ENCODE measurements at regions of chr2 and their contacts with region 1.

Region 1: DNA sequence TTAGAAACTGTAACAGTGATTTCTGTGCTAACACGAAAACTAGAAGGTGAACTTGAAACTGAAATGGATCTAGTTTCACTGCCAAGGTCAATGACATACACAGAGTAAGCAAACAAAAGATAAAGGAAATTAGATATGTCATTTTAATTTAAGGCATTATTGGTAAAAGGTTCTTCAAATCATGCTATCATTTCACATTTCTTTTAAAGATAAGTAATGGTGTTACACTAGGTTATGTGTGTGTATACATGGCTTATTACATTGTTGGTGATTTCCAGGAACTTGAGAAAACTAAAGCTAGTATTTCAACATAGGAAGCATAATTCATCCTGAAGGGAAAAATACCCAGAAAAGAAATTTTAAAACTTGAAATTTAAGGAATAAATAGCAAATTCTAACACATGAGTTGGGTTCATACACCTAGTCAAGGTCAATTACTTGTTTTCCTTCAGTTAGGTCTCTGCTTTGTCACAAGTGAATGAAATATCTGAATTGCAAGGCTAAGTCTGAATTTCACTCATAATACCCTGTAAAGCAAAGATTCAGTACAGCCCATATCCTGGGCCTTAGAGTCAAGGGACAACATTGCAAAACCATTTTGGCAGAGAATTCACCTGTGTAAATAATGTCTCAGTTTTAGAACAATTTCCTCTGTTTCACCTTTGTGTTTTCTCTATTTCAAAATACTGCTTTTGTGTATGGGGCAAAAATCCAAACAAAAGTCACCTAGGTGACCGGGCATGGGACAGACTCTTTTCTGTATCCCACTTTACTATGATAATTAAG is 141.6 kb downstream of the SRBD1 start:
- DNase-seq: no peak
- H3K4me3 ChIP-seq: no peak overlapping the region
- H3K27ac ChIP-seq: peak overlapping the region; percentile 72 to 77
- H3K4me1 ChIP-seq: peaks cover 0 to 17% of the 10 kb centered on the region in 2 donors
- H3K27me3 ChIP-seq: no peaks in the 10 kb centered on the region
- CTCF ChIP-seq: no peak

Region 2: DNA sequence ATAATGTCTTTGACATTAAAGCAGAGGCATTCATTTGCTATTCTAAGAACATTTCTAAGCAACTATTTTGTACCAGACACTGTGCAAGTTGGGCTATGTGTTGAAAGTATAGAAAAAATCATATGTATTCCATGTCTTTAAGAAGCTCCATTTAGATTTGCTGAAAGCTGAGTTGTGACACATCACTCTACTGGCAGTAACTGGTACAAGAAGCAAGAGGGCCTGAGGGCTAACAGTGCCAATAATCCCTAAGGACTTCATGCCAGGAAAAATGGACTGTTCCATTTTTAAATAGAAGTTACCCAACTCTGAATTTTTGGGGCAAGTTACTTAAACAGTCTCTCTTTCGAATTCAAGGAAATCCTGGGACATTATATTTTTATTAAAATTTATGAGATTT is 37.1 kb before region 1 on chr2:
- intact Hi-C with region 1: loop called (anchors 5 kb)
- DNase-seq: peak in 1 of 2 donors; percentile 72
- H3K4me3 ChIP-seq: no peak overlapping the region
- H3K27ac ChIP-seq: peak overlapping the region; percentile 13 to 19
- H3K4me1 ChIP-seq: peaks cover 0 to 11% of the 10 kb centered on the region in 2 donors
- H3K27me3 ChIP-seq: no peaks in the 10 kb centered on the region
- CTCF ChIP-seq: peak in 1 of 3 experiments; percentile 29